PC-9 (cell line): ENCODE measurements at regions of chr11 and their contacts with region 1.

Region 1: GRCh38 chr11:124707829-124708228 is 31.9 kb upstream of the NRGN start:
- DNase-seq: peak; percentile 8 to 46
- H3K4me3 ChIP-seq: no peak overlapping the region
- H3K27ac ChIP-seq: no peak overlapping the region
- H3K4me1 ChIP-seq: no peaks in the 10 kb centered on the region
- H3K27me3 ChIP-seq: no peaks in the 10 kb centered on the region
- CTCF ChIP-seq: no peak

Region 2: DNA sequence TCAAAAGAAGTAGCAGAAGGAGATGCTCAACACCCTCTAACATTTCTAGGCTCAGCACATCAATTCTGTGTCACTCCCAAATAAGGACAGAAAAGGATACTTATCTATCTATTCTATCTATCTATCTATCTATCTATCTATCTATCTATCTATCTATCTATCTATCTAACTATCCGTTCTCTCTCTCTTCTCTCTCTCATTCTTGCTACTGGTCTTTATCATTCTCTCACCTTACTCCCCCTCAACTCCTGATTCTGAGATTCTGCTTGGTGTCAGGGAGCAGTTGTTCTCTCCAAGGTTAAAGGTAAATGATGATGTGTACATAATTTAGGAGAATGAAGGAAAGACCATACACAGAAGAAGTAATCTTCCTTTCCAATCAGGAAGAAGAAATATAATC is 712.7 kb before region 1 on chr11 and contains the start of gene OR10G6:
- CTCF ChIA-PET with region 1: interaction called, 11 read pairs
- POLR2A ChIA-PET with region 1: no interaction called
- intact Hi-C with region 1: no loop called
- DNase-seq: no peak
- H3K4me3 ChIP-seq: no peak within 1 kb of the TSS
- H3K27ac ChIP-seq: no peak within 1 kb of the TSS
- H3K4me1 ChIP-seq: no peaks in the 10 kb centered on the region
- H3K27me3 ChIP-seq: peaks cover 48% of the 10 kb centered on the region
- CTCF ChIP-seq: no peak
- total RNA-seq, gene OR10G6: not detected in 2 replicates

Region 3: DNA sequence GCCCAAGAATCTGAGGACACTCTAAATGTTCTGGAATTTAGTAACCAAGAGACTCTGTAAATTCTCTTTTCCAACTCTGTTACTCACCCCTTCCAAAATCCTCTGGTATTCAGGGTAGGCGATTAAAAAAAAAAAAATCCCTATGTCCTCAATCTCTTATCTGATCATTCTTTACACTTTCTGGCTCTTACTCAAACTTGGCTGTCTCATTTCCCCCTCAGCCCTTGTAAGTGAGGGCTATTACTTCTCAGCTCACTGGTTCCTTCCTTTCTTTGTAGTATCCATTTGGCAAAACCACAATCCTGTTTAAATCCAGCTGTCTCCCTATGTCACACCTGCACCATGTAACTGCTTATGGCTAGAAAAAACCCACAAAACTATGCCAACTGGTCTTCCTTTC is 105.0 kb after region 1 on chr11:
- CTCF ChIA-PET with region 1: no interaction called
- POLR2A ChIA-PET with region 1: no interaction called
- intact Hi-C with region 1: no loop called
- DNase-seq: peak in 1 of 2 experiments; percentile 86
- H3K4me3 ChIP-seq: no peak overlapping the region
- H3K27ac ChIP-seq: peak overlapping the region; percentile 0; the same call in 1 of the 2 replicates
- H3K4me1 ChIP-seq: peaks cover 47% of the 10 kb centered on the region
- H3K27me3 ChIP-seq: no peaks in the 10 kb centered on the region
- CTCF ChIP-seq: no peak

Region 4: DNA sequence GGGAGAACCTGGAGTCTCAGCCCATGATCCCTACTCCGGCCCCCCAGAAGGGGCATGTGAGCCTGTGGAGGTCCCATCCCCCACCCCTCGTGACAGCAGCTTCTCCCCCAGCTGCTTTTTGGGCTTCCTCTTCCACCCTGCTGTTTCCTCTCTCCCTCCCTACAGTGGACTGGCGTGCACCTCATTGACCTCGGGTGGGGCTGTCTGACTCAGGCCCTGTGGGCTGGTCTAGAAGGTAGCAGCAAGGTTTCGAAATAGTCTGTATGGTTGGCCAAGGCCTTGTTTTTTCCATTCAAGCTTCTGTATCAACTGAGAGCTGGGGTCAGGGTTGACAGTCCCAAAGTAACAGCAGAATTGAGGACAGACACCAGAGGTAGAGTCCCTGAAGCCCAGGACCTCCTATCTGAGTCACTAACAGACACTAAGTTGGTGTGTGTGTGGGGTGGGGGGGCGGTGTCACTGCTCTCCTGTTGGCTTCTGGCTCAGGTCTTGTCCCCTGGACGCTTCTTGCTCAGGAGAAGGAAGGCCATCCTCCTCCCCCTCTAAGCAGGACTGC is 362.9 kb after region 1 on chr11:
- CTCF ChIA-PET with region 1: no interaction called
- POLR2A ChIA-PET with region 1: no interaction called
- intact Hi-C with region 1: no loop called
- DNase-seq: peak; percentile 63 to 86
- H3K4me3 ChIP-seq: no peak overlapping the region; the same call in 1 of the 2 replicates
- H3K27ac ChIP-seq: peak overlapping the region; percentile 75
- H3K4me1 ChIP-seq: peaks cover 49% of the 10 kb centered on the region
- H3K27me3 ChIP-seq: no peaks in the 10 kb centered on the region
- CTCF ChIP-seq: no peak